Mammary epithelial cell (primary cell): ENCODE measurements at regions of chr1 and their contacts with region 1.

Region 1: GRCh38 chr1:175887981-175888433 is 144.6 kb upstream of the TNR start:
- DNase-seq: peak; percentile 11
- H3K4me3 ChIP-seq: no peak overlapping the region
- H3K27ac ChIP-seq: no peak overlapping the region
- H3K4me1 ChIP-seq: no peaks in the 10 kb centered on the region
- H3K27me3 ChIP-seq: no peaks in the 10 kb centered on the region
- CTCF ChIP-seq: peak; percentile 91

Region 2: DNA sequence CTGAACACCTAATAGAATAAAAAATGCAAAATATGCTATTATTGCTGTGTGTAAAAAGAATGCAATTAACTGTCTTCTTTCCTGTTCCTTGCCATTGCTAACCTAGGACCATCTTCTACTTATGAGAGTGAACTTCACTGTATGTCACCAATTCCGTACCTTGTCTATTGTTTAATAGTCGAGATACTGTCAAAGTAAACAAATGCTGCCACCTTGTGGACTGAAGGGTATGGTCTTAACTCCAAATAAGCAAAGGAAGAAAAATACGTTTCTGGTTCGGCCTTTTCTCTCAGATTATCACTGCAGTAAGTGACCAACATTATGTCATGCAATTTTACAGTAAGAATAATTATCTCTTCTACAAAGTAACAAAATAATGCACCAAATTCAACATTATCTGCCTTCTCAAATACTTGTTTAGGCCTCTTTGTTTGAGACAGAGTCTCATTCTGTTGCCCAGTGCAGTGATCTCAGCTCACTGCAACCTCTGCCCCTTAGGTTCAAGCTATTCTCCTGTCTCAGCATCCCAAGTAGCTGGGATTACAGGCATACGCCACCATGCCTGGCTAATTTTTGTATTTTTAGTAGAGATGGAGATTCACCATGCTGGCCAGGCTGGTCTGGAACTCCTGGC is 185.6 kb after region 1 on chr1:
- CTCF ChIA-PET with region 1: no interaction called
- dilution Hi-C with region 1: no loop called
- in situ Hi-C with region 1: no loop called
- intact Hi-C with region 1: loop called (anchors 1 kb)
- DNase-seq: peak; percentile 48
- H3K4me3 ChIP-seq: no peak overlapping the region
- H3K27ac ChIP-seq: no peak overlapping the region
- H3K4me1 ChIP-seq: no peaks in the 10 kb centered on the region
- H3K27me3 ChIP-seq: no peaks in the 10 kb centered on the region
- CTCF ChIP-seq: peak; percentile 68 to 73